PC-9 (cell line): ENCODE measurements at regions of chr16 and their contacts with region 1.

Region 1: DNA sequence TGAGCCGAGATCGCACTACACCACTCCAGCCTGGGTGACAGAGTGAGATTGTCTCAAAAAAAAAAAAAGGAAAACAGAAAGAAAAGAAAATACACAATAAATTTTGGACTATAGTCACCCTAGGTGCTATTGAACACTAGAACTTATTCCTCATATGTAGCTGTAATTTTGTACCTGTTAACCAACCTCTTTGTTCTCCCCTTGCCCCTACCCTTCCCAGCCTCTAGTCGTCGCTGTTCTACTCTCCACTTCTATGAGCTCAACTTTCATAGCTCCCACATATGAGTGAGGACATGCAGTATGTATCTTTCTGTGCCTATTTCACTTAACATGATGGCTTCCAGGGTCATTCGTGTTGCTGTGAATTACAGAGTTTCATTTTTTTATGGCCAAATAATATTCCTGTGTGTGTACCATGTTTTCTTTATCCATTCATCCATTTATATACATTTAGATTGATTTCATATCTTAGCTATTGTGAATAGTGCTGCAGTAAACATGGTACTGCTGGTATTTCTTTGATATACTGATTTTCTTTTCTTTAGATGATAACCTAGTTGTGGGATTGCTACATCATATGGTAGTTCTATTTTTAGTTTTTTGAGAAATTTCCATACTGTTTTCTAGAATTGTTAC is 28.3 kb downstream of the VPS35L start:
- DNase-seq: peak in 1 of 2 experiments; percentile 46
- H3K4me3 ChIP-seq: no peak overlapping the region
- H3K27ac ChIP-seq: no peak overlapping the region
- H3K4me1 ChIP-seq: no peaks in the 10 kb centered on the region
- H3K27me3 ChIP-seq: no peaks in the 10 kb centered on the region
- CTCF ChIP-seq: peak; percentile 91

Region 2: DNA sequence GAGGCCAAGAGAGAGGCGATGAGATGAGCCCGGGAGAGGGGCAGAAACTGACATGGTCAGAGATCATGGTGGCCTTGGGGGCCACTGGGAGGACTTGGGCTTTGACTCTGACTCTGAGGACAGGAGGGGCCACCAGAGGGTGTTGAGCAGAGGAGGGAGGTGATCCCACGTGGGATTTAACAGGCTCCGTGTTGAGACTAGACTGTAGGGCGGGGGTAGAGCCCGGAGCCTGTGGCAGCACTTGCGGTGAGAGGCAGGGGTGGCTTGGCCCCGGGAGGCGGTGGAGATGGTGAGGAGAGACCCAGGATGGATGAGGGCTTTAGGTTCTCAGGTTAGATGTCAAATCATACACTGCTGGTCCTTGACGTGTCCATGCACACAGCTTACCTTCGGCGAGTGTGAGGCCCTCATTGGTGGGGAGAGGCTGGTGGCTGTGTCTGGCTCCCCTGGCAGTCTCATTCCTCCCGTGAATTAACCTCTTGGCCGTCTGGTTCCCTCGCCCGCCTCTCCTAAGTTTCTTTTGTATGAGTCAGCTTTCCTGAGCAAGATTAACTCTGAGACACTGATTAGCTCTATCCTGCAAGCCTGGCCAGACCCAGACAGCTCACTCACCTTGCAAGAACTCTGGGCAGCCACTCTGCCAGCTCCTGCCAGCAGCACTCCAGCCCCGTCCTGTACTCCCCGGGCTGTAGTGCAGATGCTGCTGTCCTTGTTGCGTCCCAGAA is 11.4 kb after region 1 on chr16:
- CTCF ChIA-PET with region 1: interaction called, 47 read pairs
- POLR2A ChIA-PET with region 1: interaction called, 6 read pairs
- intact Hi-C with region 1: no loop called
- DNase-seq: peak; percentile 84 to 90
- H3K4me3 ChIP-seq: no peak overlapping the region
- H3K27ac ChIP-seq: peak overlapping the region; percentile 23
- H3K4me1 ChIP-seq: peaks cover 26% of the 10 kb centered on the region
- H3K27me3 ChIP-seq: no peaks in the 10 kb centered on the region
- CTCF ChIP-seq: no peak